ENCODE measurements at regions of chr12 and their contacts with region 1.

Region 1: GRCh38 chr12:68374307-68374982 is 42.3 kb upstream of the MDM1 start:
- DNase-seq: no peak
- ATAC-seq: peak; percentile 78
- H3K4me3 Mint-ChIP-seq: peak overlapping the region; percentile 32
- H3K27ac Mint-ChIP-seq: peak overlapping the region; percentile 77
- H3K4me1 Mint-ChIP-seq: peaks cover 33% of the 10 kb centered on the region
- H3K27me3 Mint-ChIP-seq: no peaks in the 10 kb centered on the region
- CTCF ChIP-seq: no peak

Region 2: DNA sequence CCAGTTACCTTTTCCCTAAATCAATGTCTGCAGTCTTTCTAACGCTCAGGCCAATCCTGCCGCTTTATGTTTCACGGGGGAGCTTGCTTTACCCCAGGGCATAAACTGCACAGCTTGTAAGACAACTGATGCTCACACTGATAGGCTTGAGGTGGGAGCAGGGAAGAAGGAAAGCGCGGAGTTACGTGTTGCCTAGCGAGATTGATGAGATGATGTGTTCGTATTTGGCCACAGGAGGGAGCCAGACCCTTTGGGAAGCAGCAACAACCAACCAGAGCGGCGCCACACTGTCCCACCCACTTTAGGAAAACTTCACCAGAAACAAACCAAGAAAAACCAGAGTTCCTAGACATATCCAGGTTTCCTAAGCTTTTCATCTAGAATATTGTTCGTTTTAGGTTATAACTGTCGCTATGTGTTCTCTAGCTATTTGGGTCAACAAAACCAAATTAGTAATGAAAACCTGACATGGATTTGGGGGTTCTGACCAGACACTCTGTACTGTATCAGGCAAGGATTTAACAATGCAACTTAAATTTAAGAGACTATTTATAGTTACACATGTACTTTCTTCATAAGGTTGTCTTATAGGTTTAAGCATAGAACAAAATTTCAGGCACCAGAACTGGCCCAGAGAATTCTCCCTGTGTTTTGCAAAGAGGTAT is 151.2 kb before region 1 on chr12:
- CTCF ChIA-PET with region 1: no interaction called
- POLR2A ChIA-PET with region 1: no interaction called
- intact Hi-C with region 1: no loop called
- DNase-seq: peak; percentile 29
- ATAC-seq: peak; percentile 99
- H3K4me3 Mint-ChIP-seq: peak overlapping the region; percentile 48
- H3K27ac Mint-ChIP-seq: no peak overlapping the region
- H3K4me1 Mint-ChIP-seq: peaks cover 5% of the 10 kb centered on the region
- H3K27me3 Mint-ChIP-seq: peaks cover 3% of the 10 kb centered on the region
- CTCF ChIP-seq: no peak

Region 3: GRCh38 chr12:68352067-68352466 is 22.4 kb before region 1 on chr12:
- CTCF ChIA-PET with region 1: no interaction called
- POLR2A ChIA-PET with region 1: no interaction called
- intact Hi-C with region 1: no loop called
- DNase-seq: no peak
- ATAC-seq: no peak
- H3K4me3 Mint-ChIP-seq: no peak overlapping the region
- H3K27ac Mint-ChIP-seq: no peak overlapping the region
- H3K4me1 Mint-ChIP-seq: no peaks in the 10 kb centered on the region
- H3K27me3 Mint-ChIP-seq: no peaks in the 10 kb centered on the region
- CTCF ChIP-seq: no peak

Region 4: GRCh38 chr12:68416826-68417225 is 42.4 kb after region 1 on chr12:
- CTCF ChIA-PET with region 1: no interaction called
- POLR2A ChIA-PET with region 1: no interaction called
- intact Hi-C with region 1: loop called (anchors 5 kb)
- DNase-seq: no peak
- ATAC-seq: no peak
- H3K4me3 Mint-ChIP-seq: no peak overlapping the region
- H3K27ac Mint-ChIP-seq: no peak overlapping the region
- H3K4me1 Mint-ChIP-seq: peaks cover 23% of the 10 kb centered on the region
- H3K27me3 Mint-ChIP-seq: no peaks in the 10 kb centered on the region
- CTCF ChIP-seq: no peak

Region 5: GRCh38 chr12:69173368-69173767 is 798.9 kb after region 1 on chr12:
- CTCF ChIA-PET with region 1: no interaction called
- POLR2A ChIA-PET with region 1: interaction called, 10 read pairs
- intact Hi-C with region 1: no loop called
- DNase-seq: no peak
- ATAC-seq: no peak
- H3K4me3 Mint-ChIP-seq: no peak overlapping the region
- H3K27ac Mint-ChIP-seq: no peak overlapping the region
- H3K4me1 Mint-ChIP-seq: no peaks in the 10 kb centered on the region
- H3K27me3 Mint-ChIP-seq: peaks cover 6% of the 10 kb centered on the region
- CTCF ChIP-seq: no peak